ENCODE measurements at regions of chr19 and their contacts with region 1.

Region 1: DNA sequence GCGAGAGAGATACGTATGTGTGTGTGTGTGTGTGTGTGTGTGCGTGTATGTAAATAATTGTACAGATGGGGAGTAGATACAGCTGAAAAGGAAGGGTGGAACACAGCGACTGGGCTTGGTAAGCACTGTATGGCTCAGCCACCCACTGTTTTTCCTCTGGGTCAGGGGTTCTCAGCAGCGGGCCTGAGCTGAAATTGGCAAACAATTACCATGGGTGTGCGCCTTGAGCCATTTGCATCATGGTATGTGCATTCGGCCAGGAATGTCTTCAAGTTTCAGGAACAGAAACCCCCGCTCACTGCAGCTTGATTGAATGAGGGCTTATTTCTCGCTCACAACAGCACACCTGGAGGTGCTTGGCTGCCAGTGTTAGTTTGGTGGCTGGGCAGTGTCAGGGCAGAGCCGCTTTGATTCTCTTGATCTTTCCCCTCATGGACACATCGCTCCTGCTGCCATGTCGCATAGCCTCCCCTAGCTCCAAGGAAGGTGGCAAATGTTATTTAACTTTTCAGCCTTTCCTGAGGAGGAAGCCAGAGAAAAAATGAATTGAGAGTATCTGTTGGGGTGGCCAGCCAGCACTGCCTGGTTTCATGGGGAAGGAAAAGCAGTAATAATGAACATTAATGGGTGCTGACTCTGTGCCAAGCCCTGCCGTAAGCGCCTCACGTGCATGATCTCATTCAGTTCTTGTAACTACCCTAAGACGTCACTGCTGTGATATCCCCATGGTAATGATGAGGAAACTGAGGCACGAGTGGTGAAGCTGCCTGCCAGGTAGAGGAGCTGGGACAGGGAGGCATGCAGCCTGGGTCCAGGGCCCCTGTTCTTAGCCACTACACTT is 126.9 kb downstream of the SIPA1L3 start:
- DNase-seq: no peak
- H3K4me3 ChIP-seq: no peak overlapping the region
- CTCF ChIP-seq: peak; percentile 14

Region 2: GRCh38 chr19:37953533-37954303 is 80.2 kb before region 1 on chr19:
- in situ Hi-C with region 1: loop called (anchors 5 kb)
- DNase-seq: no peak
- H3K4me3 ChIP-seq: no peak overlapping the region
- CTCF ChIP-seq: no peak

Region 3: DNA sequence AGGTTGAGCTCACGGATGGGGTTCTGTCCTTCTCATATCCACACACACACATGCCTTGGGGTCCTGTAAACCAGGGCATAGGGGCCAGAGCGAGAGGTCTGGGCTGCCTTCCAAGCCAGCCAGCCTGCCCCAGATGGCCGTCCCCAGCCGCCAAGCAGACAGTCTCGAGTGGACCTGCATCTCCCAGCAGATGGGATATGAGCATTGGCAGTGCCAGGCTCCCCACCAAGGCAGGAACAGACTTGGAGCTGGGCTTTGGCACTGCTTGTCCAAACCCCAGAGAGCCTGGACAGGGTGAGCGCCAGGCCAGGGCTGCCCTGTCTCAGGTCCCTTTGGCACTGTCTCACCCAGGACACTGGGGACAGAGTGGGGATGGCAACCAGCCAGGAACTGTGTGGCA is 59.7 kb after region 1 on chr19:
- in situ Hi-C with region 1: no loop called
- DNase-seq: no peak
- H3K4me3 ChIP-seq: no peak overlapping the region
- CTCF ChIP-seq: no peak